ENCODE measurements at regions of chr19 and their contacts with region 1.

Region 1: GRCh38 chr19:16382775-16383543 is 58.3 kb downstream of the KLF2 start:
- DNase-seq: peak; percentile 89 to 94
- ATAC-seq: peak; percentile 79 to 90 (median 88)
- H3K4me3 ChIP-seq: peak overlapping the region in 4 of 10 donors; percentile 1 to 22 (median 8)
- H3K27ac ChIP-seq: peak overlapping the region; percentile 72 to 96 (median 90)
- H3K4me1 ChIP-seq: peaks cover 28 to 65% (median 49%) of the 10 kb centered on the region in 9 donors
- H3K27me3 ChIP-seq: no peaks in the 10 kb centered on the region
- CTCF ChIP-seq: peak; percentile 71 to 97 (median 89)

Region 2: DNA sequence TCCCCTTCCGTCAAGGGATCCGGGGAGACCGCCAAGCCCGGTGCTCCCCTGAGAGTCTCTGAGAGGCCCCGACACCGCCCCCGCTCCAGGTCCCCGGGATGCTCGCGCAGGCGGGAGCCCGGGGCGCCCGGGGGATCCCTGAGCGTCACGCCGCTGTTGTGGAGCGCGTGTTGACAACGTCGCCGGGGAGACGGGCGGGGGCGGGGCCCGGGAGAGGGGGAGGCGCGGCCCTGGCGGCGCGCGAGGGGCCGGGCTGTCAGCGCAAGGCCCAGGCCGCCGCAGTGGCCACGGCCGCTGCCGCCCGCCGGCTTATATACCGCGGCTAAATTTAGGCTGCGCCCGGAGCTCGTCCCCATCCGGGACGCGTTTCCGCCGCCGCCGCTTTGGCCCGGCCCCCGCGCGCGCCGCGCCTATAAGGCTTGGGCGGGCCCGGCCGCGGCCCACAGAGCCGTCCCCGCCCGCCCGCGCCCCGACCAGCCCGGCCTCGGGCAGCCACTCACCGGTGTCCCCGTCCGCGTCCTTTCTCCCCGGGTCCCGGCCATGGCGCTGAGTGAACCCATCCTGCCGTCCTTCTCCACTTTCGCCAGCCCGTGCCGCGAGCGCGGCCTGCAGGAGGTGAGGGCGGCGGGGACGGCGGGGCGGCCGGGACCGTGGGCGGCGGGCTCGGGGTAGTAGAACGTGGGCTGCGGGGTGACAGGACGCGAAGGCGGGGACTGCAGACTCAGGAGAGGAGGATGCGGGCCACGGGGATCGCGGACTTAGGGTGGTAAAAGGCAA is 58.4 kb before region 1 on chr19 and contains the start of gene KLF2:
- intact Hi-C with region 1: loop called in 5 of 10 experiments (anchors 2 to 10 kb)
- DNase-seq: peak; percentile 95 to 97
- ATAC-seq: peak; percentile 69 to 92 (median 84)
- H3K4me3 ChIP-seq: peak within 1 kb of the TSS; percentile 61 to 96 (median 87)
- H3K27ac ChIP-seq: peak within 1 kb of the TSS; percentile 93 to 99 (median 98)
- H3K4me1 ChIP-seq: peaks cover 0 to 50% (median 35%) of the 10 kb centered on the region in 9 donors
- H3K27me3 ChIP-seq: no peaks in the 10 kb centered on the region
- CTCF ChIP-seq: no peak
- total RNA-seq, gene KLF2: 25.5 to 76.2 (median 50.4) TPM

Region 3: GRCh38 chr19:16330368-16330801 is 52.6 kb before region 1 on chr19:
- intact Hi-C with region 1: loop called in 9 of 10 experiments (anchors 2 to 10 kb)
- DNase-seq: peak; percentile 66 to 73
- ATAC-seq: peak; percentile 18 to 61 (median 42)
- H3K4me3 ChIP-seq: no peak overlapping the region
- H3K27ac ChIP-seq: peak overlapping the region; percentile 5 to 99 (median 90)
- H3K4me1 ChIP-seq: peaks cover 0 to 66% (median 33%) of the 10 kb centered on the region in 9 donors
- H3K27me3 ChIP-seq: no peaks in the 10 kb centered on the region
- CTCF ChIP-seq: no peak

Region 4: DNA sequence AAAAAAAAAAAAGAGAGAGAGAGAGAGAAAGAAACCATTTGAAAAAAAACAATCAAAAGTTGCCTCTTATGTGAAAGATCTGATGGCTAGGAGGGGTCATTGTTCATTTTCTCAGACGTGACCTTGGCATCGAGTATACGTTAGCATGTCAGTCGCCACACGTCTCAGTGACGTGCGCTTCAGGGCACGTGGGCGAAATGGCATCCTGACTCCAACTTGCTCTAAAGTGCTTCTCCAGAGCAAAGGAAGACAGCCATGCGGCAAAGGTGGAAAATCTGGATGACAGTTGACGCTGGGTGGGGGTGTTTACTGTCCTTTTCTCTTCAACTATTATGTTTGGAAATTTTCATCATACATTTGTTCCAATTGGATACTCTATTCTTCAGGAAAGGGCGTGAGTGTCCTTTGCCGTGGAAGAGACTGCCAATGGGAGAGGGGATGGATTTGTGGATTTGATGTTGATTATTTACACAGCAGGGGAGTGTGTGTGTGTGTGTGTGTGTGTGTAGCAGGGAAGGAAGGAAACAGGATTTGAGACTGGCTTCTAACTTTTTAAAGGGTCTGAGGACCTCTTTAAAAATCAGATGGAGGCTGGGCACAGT is 33.3 kb before region 1 on chr19:
- intact Hi-C with region 1: loop called in 4 of 10 experiments (anchors 2 to 5 kb)
- DNase-seq: peak in 1 of 2 donors; percentile 74
- ATAC-seq: peak; percentile 10 to 77 (median 48)
- H3K4me3 ChIP-seq: no peak overlapping the region
- H3K27ac ChIP-seq: peak overlapping the region in 8 of 10 donors; percentile 44 to 95 (median 74)
- H3K4me1 ChIP-seq: peaks cover 0 to 69% (median 42%) of the 10 kb centered on the region in 9 donors
- H3K27me3 ChIP-seq: no peaks in the 10 kb centered on the region
- CTCF ChIP-seq: peak in 1 of 9 donors; percentile 19

Region 5: DNA sequence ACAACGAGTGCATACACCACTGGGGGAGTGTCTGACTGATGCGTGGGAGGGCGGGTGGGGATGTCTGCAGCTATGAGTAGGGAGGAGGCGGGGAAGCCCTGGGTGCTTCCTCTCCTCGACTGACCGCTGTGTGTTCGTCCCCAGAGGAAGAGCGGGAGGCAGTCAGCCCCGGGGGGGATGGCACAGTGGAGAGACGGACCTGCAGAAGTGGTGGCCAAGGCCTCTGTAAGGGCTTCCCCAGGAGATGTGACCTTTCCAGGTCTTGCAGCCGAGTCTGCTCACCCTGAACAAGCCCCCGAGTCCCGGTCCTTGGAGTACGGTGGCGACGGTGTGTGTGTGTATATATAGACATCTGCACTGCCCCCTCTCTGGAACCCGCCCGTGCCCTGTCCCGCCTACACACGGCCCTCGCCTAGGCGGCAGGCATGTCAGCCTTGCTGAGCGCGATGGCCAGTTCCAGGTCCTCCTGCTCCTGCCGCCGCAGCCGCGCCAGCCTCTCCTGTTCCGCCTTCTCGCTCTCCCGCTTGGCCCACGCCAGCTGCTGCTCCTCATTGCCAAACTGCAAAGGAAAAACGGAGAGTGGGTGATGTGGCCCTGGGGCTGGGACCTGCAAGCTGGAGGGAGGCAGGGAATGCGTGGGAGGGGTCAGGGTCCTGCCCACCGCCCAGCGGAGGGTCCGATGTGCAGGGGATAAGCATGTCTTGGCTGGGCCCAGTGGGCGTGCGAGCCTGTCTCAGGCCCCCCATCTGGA is 27.5 kb before region 1 on chr19:
- intact Hi-C with region 1: loop called in 1 of 10 experiments (anchors 2 kb)
- DNase-seq: peak; percentile 42 to 51
- ATAC-seq: peak; percentile 62 to 74 (median 66)
- H3K4me3 ChIP-seq: peak overlapping the region in 6 of 10 donors; percentile 13 to 37 (median 30)
- H3K27ac ChIP-seq: peak overlapping the region in 5 of 10 donors; percentile 41 to 65 (median 52)
- H3K4me1 ChIP-seq: peaks cover 4 to 54% (median 29%) of the 10 kb centered on the region in 9 donors
- H3K27me3 ChIP-seq: no peaks in the 10 kb centered on the region
- CTCF ChIP-seq: no peak

Region 6: GRCh38 chr19:16506961-16507360 is 124.0 kb after region 1 on chr19:
- intact Hi-C with region 1: no loop called
- DNase-seq: no peak
- ATAC-seq: no peak
- H3K4me3 ChIP-seq: no peak overlapping the region
- H3K27ac ChIP-seq: peak overlapping the region in 1 of 10 donors; percentile 18
- H3K4me1 ChIP-seq: no peaks in the 10 kb centered on the region
- H3K27me3 ChIP-seq: no peaks in the 10 kb centered on the region
- CTCF ChIP-seq: no peak

Measured in heart right ventricle (tissue), 16 donors.